ENCODE measurements at regions of chr12 and their contacts with region 1.

Region 1: DNA sequence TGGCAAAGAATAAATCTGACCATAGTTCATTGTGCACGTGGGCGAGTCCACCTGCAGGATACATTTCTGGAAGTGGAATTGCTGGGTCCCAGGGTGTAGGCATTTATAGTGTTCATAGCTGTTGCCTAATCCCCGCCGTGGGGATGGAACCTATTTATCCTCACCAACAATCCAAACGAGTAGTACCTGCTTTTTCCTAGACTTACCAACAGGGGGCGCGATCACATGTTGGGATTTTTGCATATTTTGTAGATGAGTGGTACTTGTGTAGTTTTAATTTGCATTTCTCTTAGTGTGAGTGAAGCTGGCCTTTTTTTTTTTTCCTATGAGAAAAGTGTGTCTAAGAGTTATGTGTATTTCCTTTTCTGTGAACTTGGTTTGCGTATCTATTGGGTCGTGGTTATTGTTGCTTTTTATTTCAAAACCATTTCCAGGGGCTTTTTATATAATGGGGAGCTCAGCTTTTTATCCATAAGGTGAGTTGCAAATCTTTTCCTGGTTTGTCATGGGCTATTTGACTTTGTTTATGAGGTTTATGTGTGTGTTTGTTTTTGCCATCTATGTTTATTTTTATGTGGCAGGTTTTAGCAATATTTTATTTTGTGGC is 67.2 kb downstream of the CCDC92 start:
- DNase-seq: peak; percentile 34 to 82 (median 66)
- ATAC-seq: peak; percentile 82
- H3K4me3 ChIP-seq: no peak overlapping the region
- H3K4me3 Mint-ChIP-seq: no peak overlapping the region
- H3K27ac ChIP-seq: no peak overlapping the region
- H3K27ac Mint-ChIP-seq: no peak overlapping the region
- H3K4me1 ChIP-seq: peaks cover 4% of the 10 kb centered on the region
- H3K4me1 Mint-ChIP-seq: peaks cover 11% of the 10 kb centered on the region
- H3K27me3 ChIP-seq: no peaks in the 10 kb centered on the region
- H3K27me3 Mint-ChIP-seq: peaks cover 4% of the 10 kb centered on the region
- CTCF ChIP-seq: peak; percentile 75

Region 2: GRCh38 chr12:123916729-123917128 is 11.3 kb after region 1 on chr12:
- CTCF ChIA-PET with region 1: interaction called, 12 read pairs
- POLR2A ChIA-PET with region 1: no interaction called
- intact Hi-C with region 1: no loop called
- DNase-seq: peak in 7 of 9 experiments; percentile 21 to 59 (median 53)
- ATAC-seq: peak; percentile 83
- H3K4me3 ChIP-seq: no peak overlapping the region
- H3K4me3 Mint-ChIP-seq: no peak overlapping the region
- H3K27ac ChIP-seq: no peak overlapping the region
- H3K27ac Mint-ChIP-seq: no peak overlapping the region
- H3K4me1 ChIP-seq: no peaks in the 10 kb centered on the region
- H3K4me1 Mint-ChIP-seq: peaks cover 7% of the 10 kb centered on the region
- H3K27me3 ChIP-seq: no peaks in the 10 kb centered on the region
- H3K27me3 Mint-ChIP-seq: peaks cover 3% of the 10 kb centered on the region
- CTCF ChIP-seq: no peak

Region 3: DNA sequence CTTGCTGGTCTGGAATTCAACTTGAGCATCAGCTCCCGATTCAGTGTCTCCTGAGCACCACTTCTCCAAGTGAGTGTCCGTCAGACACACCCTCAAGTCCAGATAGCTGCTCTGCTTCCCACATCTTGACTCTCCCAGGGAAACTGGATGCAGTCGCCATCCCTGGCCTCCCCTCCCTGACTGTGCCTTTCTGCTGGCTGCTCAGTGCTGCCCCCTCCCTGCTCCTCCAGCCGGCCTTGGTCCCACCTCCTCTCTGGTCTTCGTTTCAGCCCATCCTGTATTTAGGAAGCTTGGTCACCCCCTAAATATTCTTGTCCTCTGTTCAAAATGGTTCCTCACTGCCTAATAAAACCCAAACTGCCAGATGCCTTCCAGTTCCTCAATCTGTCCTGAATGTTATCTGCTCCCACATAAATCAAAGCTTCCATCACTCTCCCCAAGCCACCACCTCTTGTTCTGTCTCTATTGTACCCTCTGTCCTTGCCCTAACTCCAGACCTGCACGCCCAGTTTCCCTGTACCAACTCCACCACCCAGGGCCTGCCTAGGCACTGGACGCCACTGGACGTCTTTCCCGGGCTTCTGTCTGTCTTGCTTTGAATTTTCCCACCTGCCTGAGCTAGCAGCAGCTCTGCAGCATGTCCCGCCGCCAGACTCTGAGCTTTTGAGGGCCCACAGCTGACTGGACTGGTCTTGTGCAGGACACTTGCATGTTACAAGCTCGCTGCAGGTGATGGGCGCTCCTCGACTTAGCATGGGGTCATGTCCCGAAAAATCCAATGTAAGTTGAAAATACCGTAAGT is 33.5 kb after region 1 on chr12:
- CTCF ChIA-PET with region 1: interaction called, 12 read pairs
- POLR2A ChIA-PET with region 1: no interaction called
- intact Hi-C with region 1: no loop called
- DNase-seq: peak in 2 of 9 experiments; percentile 31 to 36
- ATAC-seq: no peak
- H3K4me3 ChIP-seq: peak overlapping the region; percentile 34 to 44
- H3K4me3 Mint-ChIP-seq: peak overlapping the region; percentile 72
- H3K27ac ChIP-seq: peak overlapping the region; percentile 55 to 81
- H3K27ac Mint-ChIP-seq: peak overlapping the region; percentile 84
- H3K4me1 ChIP-seq: peaks cover 29% of the 10 kb centered on the region
- H3K4me1 Mint-ChIP-seq: peaks cover 33% of the 10 kb centered on the region
- H3K27me3 ChIP-seq: no peaks in the 10 kb centered on the region
- H3K27me3 Mint-ChIP-seq: no peaks in the 10 kb centered on the region
- CTCF ChIP-seq: no peak

Region 4: DNA sequence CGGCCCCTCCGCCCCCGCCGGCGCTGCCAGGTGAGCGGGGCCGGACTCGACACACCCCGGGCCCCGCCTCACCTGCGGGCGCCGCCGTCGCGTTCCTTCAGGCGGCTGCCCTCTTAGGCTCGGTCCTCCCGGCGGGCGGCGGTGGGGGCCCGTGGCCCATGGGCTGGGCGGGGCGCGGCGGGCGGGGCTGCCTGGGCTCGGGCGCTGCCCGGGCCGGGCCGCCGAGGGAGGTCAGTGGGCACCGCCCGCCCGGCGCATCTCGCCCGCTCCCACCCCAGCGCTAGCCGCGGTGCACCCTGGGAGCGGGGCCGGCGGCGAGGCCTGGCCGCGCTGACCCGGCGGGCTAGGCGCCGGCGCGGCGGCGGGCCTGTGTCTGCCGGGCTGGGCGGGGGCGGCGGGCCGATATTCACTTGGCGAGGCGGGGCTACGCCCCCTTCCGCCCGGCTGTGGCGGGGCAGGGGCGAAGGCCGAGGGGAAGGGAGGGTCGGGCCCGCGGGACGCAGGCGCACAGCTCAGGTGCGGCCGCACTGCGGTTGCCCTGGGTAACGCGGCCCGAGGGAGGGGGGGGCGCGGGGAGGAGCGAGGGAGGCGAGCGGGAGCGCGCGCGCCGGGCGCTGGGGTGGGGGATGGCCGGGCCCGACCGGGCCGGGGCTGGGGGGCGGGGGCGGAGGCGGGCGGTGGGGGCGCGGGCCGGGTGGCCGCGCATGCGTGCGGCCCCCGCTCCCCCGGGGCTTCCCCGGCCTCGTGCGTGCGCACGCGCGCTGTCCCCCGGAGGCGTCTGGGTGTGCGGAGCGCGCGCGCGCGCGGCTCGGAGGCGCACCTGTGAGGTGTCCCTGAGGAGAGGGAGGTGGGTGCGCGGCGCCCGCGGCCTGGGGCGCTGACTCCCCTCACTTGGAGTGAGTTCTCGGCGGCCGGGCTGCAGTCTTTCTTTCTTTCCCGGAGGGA is 67.3 kb after region 1 on chr12 and contains the starts of genes CCDC92 and ZNF664:
- CTCF ChIA-PET with region 1: interaction called, 11 read pairs
- POLR2A ChIA-PET with region 1: no interaction called
- intact Hi-C with region 1: no loop called
- DNase-seq: peak; percentile 88 to 98 (median 95)
- ATAC-seq: peak; percentile 75
- H3K4me3 ChIP-seq: peak within 1 kb of the TSS; percentile 60 to 63
- H3K4me3 Mint-ChIP-seq: peak within 1 kb of the TSS; percentile 91
- H3K27ac ChIP-seq: peak within 1 kb of the TSS; percentile 34 to 44
- H3K27ac Mint-ChIP-seq: peak within 1 kb of the TSS; percentile 89
- H3K4me1 ChIP-seq: peaks cover 19% of the 10 kb centered on the region
- H3K4me1 Mint-ChIP-seq: peaks cover 36% of the 10 kb centered on the region
- H3K27me3 ChIP-seq: no peaks in the 10 kb centered on the region
- H3K27me3 Mint-ChIP-seq: no peaks in the 10 kb centered on the region
- CTCF ChIP-seq: no peak
- total RNA-seq, gene CCDC92: 6.9 to 8.1 TPM
- total RNA-seq, gene ZNF664: 14.2 to 17.9 TPM

Region 5: DNA sequence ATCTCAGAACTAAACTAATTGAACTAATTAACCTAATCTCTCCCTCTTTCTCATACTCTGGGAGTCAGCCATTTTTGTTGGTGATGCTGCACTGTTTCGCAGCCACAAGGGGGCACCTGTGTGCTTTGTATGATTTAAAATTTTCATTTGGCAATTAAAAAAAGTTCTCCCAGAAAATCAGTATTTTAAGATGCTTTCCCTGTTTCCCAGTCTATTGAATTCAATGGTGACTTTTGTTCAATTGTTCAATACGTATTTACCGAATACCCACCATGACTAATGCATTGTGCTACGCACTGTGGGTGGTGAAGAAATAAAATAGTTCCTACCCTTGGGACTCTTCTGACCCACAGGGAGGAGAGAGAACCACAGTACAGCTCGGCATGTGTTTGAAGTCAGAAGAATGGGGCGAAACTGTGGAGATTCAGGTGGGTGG is 131.3 kb after region 1 on chr12:
- CTCF ChIA-PET with region 1: interaction called, 11 read pairs
- POLR2A ChIA-PET with region 1: no interaction called
- intact Hi-C with region 1: loop called in 1 of 2 experiments (anchors 2 kb)
- DNase-seq: peak in 7 of 9 experiments; percentile 20 to 69 (median 52)
- ATAC-seq: no peak
- H3K4me3 ChIP-seq: no peak overlapping the region
- H3K4me3 Mint-ChIP-seq: no peak overlapping the region
- H3K27ac ChIP-seq: no peak overlapping the region
- H3K27ac Mint-ChIP-seq: no peak overlapping the region
- H3K4me1 ChIP-seq: no peaks in the 10 kb centered on the region
- H3K4me1 Mint-ChIP-seq: no peaks in the 10 kb centered on the region
- H3K27me3 ChIP-seq: no peaks in the 10 kb centered on the region
- H3K27me3 Mint-ChIP-seq: no peaks in the 10 kb centered on the region
- CTCF ChIP-seq: peak; percentile 99